Activated T-helper 2 cell treated with anti-CD3 and anti-CD28 coated beads, Interferon-gamma antibody, Interleukin-2, Interleukin-4, amounts not matched to agents 10 μg/mL and 5 μg/mL and 100 μg/mL, durations not matched to agents 14 hours and 24 hours and 36 hours (primary cell): ENCODE measurements at regions of chrX and their contacts with region 1.

Region 1: DNA sequence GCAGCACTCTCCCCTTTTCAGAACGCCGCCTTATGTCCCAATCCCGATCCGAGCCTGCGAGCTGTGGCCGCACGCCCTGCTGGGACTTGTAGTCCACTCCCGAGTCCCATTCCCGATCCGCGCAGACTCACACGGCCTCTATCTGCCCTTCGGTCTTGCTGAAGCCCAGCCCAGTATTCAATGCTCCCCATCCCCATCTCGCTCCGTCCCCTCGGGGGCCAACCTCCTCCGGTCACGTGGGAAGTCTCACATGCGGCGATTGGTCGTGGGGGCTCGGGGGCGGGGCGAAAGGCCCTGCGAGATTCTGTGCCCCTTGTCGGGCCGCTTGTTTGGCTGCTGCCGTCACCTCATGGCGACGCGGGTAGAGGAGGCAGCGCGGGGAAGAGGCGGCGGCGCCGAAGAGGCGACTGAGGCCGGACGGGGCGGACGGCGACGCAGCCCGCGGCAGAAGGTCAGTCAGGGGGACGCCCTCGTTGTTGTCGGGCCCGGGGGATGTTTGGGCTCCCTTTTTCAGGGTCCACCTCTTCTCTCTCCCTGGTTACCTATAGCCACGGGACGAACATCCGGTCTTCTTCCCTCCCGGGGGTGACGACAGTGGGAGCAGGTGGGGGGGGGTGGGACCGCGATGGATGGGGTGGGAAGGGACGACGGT is at the start of gene TXLNG:
- DNase-seq: peak; percentile 92
- H3K4me3 Mint-ChIP-seq: peak within 1 kb of the TSS; percentile 89
- H3K27ac Mint-ChIP-seq: peak within 1 kb of the TSS; percentile 73
- H3K4me1 Mint-ChIP-seq: peaks cover 9% of the 10 kb centered on the region
- H3K27me3 Mint-ChIP-seq: no peaks in the 10 kb centered on the region
- total RNA-seq, gene TXLNG: 19.9 and 21.4 TPM in 2 replicates

Region 2: GRCh38 chrX:16719334-16720084 is 66.8 kb before region 1 on chrX and contains the start of gene SYAP1:
- intact Hi-C with region 1: loop called (anchors 2 kb)
- DNase-seq: peak; percentile 88
- H3K4me3 Mint-ChIP-seq: peak within 1 kb of the TSS; percentile 90
- H3K27ac Mint-ChIP-seq: peak within 1 kb of the TSS; percentile 90
- H3K4me1 Mint-ChIP-seq: peaks cover 20% of the 10 kb centered on the region
- H3K27me3 Mint-ChIP-seq: no peaks in the 10 kb centered on the region
- total RNA-seq, gene SYAP1: 21.3 and 22.6 TPM in 2 replicates

Region 3: DNA sequence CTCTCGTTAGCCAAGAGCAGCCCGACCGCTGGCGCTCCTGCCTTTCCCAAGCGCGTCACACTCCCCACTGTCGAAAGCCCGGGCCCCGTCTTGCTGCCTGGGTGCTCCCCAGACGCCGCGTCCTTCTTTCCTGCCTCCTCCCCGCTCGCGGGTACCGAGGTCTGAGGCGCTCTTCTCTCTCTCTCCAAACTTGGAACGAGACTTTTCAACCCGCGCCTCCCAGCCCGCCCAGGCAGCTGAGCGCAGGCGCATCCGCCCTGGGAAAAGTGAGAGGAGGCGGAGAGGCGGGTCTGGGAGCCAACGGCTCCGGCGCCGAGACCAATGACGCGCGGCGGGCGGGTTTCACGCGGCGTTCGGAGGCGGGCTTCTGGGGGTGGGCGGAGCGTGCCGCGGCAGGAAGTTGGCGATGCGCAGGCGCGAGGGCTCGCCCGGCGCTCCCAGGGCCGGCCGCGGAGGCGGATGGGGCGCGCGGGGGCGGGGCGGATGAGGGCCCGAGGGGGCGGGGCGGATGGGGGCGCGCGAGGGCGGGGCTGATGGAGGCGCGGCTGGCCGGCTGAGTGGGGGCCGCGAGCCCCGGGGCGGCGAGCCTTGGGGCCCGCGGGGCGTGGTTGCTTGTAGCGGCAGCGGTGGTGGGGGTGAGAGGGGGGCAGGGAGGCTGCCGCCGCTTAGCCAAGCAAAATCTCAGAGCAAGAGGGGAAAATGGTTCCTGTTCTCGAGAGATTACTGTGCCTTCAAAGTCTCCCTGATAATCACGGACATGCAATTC is 84.0 kb after region 1 on chrX and contains the start of gene RBBP7:
- intact Hi-C with region 1: loop called (anchors 1 kb)
- DNase-seq: peak; percentile 87
- H3K4me3 Mint-ChIP-seq: peak within 1 kb of the TSS; percentile 96
- H3K27ac Mint-ChIP-seq: peak within 1 kb of the TSS; percentile 98
- H3K4me1 Mint-ChIP-seq: peaks cover 19% of the 10 kb centered on the region
- H3K27me3 Mint-ChIP-seq: peaks cover 5% of the 10 kb centered on the region
- total RNA-seq, gene RBBP7: 163 and 164 TPM in 2 replicates